Colonic mucosa (tissue), 4 donors: ENCODE measurements at regions of chr22 and their contacts with region 1.

Region 1: DNA sequence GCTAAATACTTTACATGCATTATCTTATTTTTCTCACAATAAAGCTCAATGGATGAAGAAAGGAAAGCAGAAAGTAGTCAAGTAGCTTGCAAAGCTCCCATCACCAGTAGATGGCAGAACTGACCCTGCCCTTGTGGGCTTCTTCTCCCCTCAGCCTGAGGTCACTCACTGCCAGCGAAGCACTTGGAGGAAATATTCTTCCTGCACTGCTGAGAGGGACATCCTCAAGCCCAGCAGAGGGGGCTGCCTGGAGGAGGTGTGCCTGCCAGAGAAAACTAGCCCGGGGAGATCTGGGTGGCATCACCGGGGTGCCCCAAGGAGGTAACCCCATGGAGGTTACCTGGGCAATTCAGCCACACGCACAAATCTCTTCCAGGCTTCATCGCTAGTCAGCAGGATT is 6.6 kb downstream of the APOL4 start:
- DNase-seq: peak; percentile 45
- H3K4me3 ChIP-seq: no peak overlapping the region
- H3K27ac ChIP-seq: no peak overlapping the region
- H3K4me1 ChIP-seq: no peaks in the 10 kb centered on the region
- H3K27me3 ChIP-seq: no peaks in the 10 kb centered on the region
- CTCF ChIP-seq: peak; percentile 54

Region 2: DNA sequence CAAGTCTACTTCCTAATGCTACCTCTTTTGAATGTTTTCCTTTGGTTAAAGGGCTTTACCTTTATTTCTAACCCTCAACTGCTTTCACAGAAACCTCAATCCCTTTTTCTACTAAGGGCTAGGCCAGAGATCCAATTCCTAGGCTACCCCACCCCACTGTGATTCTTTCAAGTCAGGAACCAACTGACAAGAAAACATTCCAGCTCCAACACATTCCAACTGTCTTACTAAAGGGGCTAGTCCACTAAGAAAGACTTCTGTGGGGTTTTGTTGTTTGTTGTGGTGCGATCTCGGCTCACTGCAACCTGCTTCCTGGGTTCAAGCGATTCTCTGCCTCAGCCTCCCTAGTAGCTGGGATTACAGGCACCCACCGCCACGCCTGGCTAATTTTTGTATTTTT is 326.0 kb before region 1 on chr22:
- intact Hi-C with region 1: no loop called
- DNase-seq: no peak
- H3K4me3 ChIP-seq: no peak overlapping the region
- H3K27ac ChIP-seq: no peak overlapping the region
- H3K4me1 ChIP-seq: no peaks in the 10 kb centered on the region
- H3K27me3 ChIP-seq: no peaks in the 10 kb centered on the region
- CTCF ChIP-seq: no peak

Region 3: DNA sequence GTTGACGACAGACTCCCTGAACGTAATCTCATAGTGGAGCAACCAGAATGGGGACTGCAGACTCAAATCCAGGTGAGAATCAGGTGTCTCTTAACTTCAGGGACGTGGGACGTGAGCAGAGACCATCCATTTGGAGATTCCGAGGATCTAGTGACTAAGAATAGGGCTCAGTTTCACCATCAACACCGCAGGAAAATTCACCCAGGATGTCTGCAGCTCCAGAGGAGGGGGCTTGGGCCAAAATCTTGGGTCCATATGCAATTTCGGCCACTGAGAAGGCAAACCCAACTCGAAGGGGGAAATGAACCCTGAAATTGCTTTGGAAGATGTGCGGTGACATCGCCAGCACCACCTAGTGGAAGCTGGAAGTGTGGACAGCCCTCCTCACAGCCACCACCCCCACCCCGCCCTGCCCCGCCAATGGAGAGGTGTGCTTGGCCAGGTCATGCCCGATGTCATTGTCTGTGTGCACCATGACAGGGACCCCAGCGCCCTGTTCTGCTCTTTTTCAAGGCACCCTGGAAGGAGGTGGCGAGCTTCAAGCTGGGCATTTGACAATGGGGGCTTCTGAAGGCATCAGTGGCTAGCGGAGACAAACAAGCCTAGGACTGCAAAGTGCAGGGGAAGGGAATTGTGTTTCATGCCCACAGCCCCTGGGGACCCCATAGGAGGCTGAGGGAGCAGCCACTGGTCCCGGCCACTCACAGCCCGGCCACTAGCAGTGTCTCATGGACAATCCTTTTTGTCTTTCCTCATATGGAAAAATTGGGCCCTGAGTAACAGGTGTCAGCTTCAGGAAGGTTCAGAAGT is 82.7 kb after region 1 on chr22:
- intact Hi-C with region 1: loop called (anchors 2 kb)
- DNase-seq: peak; percentile 63
- H3K4me3 ChIP-seq: no peak overlapping the region
- H3K27ac ChIP-seq: no peak overlapping the region
- H3K4me1 ChIP-seq: peaks cover 6% of the 10 kb centered on the region
- H3K27me3 ChIP-seq: no peaks in the 10 kb centered on the region
- CTCF ChIP-seq: peak; percentile 68

Region 4: DNA sequence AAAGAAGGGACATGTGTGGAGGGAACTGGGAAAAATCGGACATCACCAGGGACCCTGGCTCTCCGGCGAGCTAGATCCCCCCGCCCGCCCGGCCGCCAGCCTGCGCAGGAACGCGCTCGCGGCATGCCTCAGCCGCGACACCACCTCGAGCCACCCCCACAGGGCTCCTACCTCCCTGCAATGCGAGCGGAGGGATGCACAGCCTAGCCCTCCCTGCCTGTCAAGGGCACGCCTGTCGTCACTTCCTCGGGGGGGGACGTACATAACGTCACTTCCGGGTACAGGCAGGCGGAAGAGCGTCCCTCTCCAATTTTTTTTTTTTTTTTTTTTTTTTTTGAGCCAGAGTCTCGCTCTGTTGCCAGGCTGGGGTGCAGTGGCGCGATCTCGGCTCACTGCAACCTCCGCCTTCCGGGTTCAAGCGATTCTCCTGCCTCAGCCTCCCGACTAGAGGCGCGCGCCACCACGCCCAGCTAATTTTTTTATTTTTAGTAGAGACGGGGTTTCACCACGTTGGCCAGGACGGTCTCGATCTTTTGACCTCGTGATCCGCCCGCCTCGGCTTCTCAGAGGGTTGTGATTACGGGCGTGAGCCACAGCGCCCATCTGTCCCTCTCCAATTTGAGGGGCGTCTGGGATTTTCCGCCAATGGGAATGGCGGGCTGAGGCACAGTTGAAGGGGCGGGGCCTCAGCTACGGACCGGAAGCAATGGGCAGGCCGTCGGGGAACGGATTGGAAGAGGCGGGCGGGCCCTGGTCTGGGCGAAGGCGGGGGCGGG is 286.6 kb after region 1 on chr22 and contains the start of gene TXN2:
- intact Hi-C with region 1: loop called (anchors 10 kb)
- DNase-seq: peak; percentile 97
- H3K4me3 ChIP-seq: peak within 1 kb of the TSS; percentile 70
- H3K27ac ChIP-seq: peak within 1 kb of the TSS; percentile 99
- H3K4me1 ChIP-seq: peaks cover 10% of the 10 kb centered on the region
- H3K27me3 ChIP-seq: no peaks in the 10 kb centered on the region
- CTCF ChIP-seq: no peak
- total RNA-seq, gene TXN2: 101 to 142 TPM

Region 5: GRCh38 chr22:36505998-36506635 is 311.1 kb after region 1 on chr22:
- intact Hi-C with region 1: no loop called
- DNase-seq: no peak
- H3K4me3 ChIP-seq: no peak overlapping the region
- H3K27ac ChIP-seq: no peak overlapping the region
- H3K4me1 ChIP-seq: peaks cover 9% of the 10 kb centered on the region
- H3K27me3 ChIP-seq: no peaks in the 10 kb centered on the region
- CTCF ChIP-seq: no peak